ENCODE measurements at regions of chr12 and their contacts with region 1.

Region 1: GRCh38 chr12:53543539-53543938 is 36.3 kb upstream of the NPFF start:
- DNase-seq: peak; percentile 78
- H3K4me3 ChIP-seq: no peak overlapping the region
- H3K27ac ChIP-seq: peak overlapping the region; percentile 43
- H3K4me1 ChIP-seq: peaks cover 8% of the 10 kb centered on the region
- H3K27me3 ChIP-seq: no peaks in the 10 kb centered on the region
- CTCF ChIP-seq: peak; percentile 79 to 91
- POLR2A ChIP-seq: no peak

Region 2: DNA sequence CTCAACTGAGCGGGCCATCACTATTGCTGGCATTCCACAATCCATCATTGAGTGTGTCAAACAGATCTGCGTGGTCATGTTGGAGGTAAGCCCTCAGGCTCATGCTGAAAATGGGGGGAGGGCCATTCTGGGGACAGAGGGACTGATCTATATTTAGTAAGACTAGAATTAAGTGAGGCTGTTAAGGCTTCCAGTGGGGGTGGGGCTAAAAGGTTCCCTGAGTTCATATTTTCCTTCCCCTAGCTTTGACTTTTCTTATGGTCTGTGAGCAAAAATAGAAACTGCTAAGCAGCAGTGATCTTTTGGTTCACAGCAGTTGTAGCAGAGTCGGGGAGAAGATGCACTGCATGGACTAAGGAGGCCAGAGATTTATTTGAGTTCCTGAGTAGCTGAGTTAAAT is 82.5 kb before region 1 on chr12:
- CTCF ChIA-PET with region 1: no interaction called
- POLR2A ChIA-PET with region 1: no interaction called
- dilution Hi-C with region 1: no loop called
- intact Hi-C with region 1: no loop called
- DNase-seq: no peak
- H3K4me3 ChIP-seq: no peak overlapping the region
- H3K27ac ChIP-seq: no peak overlapping the region
- H3K4me1 ChIP-seq: no peaks in the 10 kb centered on the region
- H3K27me3 ChIP-seq: no peaks in the 10 kb centered on the region
- CTCF ChIP-seq: no peak
- POLR2A ChIP-seq: no peak

Region 3: GRCh38 chr12:53476769-53477209 is 66.8 kb before region 1 on chr12:
- CTCF ChIA-PET with region 1: no interaction called
- POLR2A ChIA-PET with region 1: no interaction called
- dilution Hi-C with region 1: no loop called
- intact Hi-C with region 1: no loop called
- DNase-seq: peak; percentile 36
- H3K4me3 ChIP-seq: no peak overlapping the region
- H3K27ac ChIP-seq: no peak overlapping the region
- H3K4me1 ChIP-seq: no peaks in the 10 kb centered on the region
- H3K27me3 ChIP-seq: no peaks in the 10 kb centered on the region
- CTCF ChIP-seq: peak; percentile 18 to 29
- POLR2A ChIP-seq: no peak

Region 4: DNA sequence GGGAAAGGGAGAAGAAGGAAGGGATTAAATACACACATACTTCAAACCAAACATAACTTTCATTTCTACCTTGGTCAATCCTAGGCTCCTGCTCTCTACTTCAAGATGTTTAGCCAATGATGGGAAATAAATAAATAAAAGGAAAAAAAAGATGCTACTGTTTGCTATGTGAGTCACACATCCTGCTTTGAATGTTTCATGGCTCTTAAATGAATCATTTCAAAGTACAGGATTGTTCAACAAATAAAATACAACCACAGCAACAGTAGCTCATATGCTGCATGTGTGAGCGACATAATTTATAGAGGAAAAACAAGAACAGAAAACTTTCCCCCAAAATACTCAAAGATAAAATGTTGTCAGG is 18.0 kb after region 1 on chr12:
- CTCF ChIA-PET with region 1: interaction called, 40 read pairs
- POLR2A ChIA-PET with region 1: no interaction called
- dilution Hi-C with region 1: no loop called
- intact Hi-C with region 1: loop called (anchors 1 kb)
- DNase-seq: peak; percentile 93
- H3K4me3 ChIP-seq: peak overlapping the region in 1 of 3 experiments; percentile 19
- H3K27ac ChIP-seq: peak overlapping the region; percentile 96
- H3K4me1 ChIP-seq: peaks cover 28% of the 10 kb centered on the region
- H3K27me3 ChIP-seq: no peaks in the 10 kb centered on the region
- CTCF ChIP-seq: no peak
- POLR2A ChIP-seq: no peak

Region 5: DNA sequence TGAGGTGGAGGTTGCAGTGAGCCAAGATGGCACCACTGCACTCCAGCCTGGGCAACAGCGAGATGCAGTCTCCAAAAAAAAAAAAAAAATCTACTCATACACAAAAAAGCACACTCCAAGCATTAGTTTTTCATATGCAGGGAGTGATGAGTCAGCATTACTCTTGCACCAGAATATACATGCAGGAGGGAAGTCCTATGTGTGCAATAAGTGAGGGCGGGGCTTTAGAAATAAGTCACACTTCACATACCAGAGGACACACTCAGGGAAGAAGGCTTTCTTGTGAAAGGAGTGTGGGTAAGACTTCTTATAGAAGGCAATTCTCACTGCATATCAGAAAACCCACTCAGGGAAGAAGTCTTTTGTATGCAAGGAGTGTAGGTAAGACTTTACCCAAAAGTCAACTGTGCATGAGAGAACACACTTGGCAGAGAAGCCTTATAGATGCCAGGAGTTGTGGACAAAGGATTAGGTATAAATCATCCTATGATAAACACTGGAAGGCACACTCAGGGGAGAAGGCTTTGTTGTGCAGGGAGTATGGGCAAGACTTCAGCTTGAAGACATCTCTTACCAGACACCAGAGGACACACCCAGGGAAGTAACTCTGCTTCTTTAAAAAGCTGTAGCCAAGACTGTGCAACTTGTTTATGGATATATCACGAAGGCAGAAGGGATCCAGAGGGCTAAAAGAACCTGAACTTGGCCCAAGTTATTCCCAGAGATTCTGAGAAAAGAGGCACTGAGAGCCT is 32.1 kb after region 1 on chr12:
- CTCF ChIA-PET with region 1: interaction called, 13 read pairs
- POLR2A ChIA-PET with region 1: no interaction called
- dilution Hi-C with region 1: no loop called
- intact Hi-C with region 1: no loop called
- DNase-seq: no peak
- H3K4me3 ChIP-seq: no peak overlapping the region
- H3K27ac ChIP-seq: no peak overlapping the region
- H3K4me1 ChIP-seq: no peaks in the 10 kb centered on the region
- H3K27me3 ChIP-seq: no peaks in the 10 kb centered on the region
- CTCF ChIP-seq: no peak
- POLR2A ChIP-seq: no peak

Region 6: DNA sequence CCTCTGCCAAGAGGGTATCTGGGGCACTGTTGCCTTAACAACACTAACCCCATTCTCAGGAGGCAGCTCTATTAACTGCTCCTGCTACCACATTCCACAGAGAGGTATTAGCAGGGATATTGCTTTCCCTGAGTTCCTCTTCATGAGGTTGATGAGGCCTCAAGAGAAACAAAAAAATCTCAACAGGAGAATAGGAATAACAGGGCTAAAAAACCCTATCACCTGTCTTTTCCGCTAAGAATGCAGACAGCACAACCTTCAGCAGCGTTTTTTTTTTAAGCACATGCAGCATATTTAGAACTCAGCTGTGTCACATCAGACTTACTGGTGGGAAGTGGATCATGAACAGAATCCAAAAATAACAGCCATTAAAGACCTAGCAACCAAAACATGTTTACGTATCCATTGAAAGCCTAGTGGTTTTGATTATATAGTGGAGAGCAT is 53.4 kb after region 1 on chr12:
- CTCF ChIA-PET with region 1: interaction called, 28 read pairs
- POLR2A ChIA-PET with region 1: no interaction called
- dilution Hi-C with region 1: no loop called
- intact Hi-C with region 1: loop called (anchors 2 kb)
- DNase-seq: peak; percentile 92
- H3K4me3 ChIP-seq: no peak overlapping the region
- H3K27ac ChIP-seq: peak overlapping the region; percentile 54
- H3K4me1 ChIP-seq: peaks cover 40% of the 10 kb centered on the region
- H3K27me3 ChIP-seq: no peaks in the 10 kb centered on the region
- CTCF ChIP-seq: no peak
- POLR2A ChIP-seq: no peak

Region 7: DNA sequence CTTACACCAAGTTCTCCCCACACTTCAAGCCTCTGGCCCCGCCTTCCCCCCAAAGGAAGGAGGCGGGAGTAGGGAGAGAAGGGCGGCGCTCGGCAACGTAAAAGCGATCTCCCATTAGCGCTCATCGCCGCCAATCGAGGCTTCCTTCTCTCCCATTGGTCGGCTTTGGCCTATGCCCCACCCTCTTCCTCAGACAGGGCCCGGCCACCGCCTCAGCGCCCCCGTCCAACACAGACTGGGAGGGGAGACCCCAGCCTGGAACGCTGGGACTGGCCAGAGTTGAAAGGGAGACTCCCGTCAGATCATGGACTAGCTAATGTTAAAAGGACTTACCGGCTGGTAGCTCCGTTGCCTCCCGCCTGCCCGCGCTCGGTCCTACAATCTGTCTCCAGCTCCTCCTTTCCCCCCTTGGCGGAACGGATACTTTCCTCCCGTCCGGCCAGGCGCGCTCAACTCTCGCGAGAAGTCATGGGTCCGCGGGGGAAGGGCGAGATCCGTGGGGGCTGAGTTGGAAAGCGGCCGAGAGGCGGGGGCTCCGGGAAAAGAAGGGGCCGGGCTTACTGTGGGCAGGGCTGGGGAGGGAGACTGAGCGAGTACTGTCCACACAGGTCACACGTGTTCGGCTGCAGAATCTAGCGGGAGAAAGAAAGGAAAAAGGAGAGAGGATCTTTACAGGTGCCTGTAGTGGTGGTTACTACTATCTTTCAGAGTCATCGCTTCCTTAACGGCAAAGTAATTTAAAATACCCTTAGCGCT is 82.6 kb after region 1 on chr12 and contains the start of gene ATF7:
- CTCF ChIA-PET with region 1: interaction called, 26 read pairs
- POLR2A ChIA-PET with region 1: interaction called, 4 read pairs
- dilution Hi-C with region 1: no loop called
- intact Hi-C with region 1: loop called (anchors 2 kb)
- DNase-seq: peak; percentile 99
- H3K4me3 ChIP-seq: peak within 1 kb of the TSS; percentile 61 to 97 (median 87)
- H3K27ac ChIP-seq: peak within 1 kb of the TSS; percentile 86
- H3K4me1 ChIP-seq: peaks cover 29% of the 10 kb centered on the region
- H3K27me3 ChIP-seq: no peaks in the 10 kb centered on the region
- CTCF ChIP-seq: no peak
- POLR2A ChIP-seq: no peak
- total RNA-seq, gene ATF7: 56.9 and 68.5 TPM in 2 replicates

Region 8: GRCh38 chr12:53659011-53659551 is 115.5 kb after region 1 on chr12:
- CTCF ChIA-PET with region 1: interaction called, 26 read pairs
- POLR2A ChIA-PET with region 1: no interaction called
- dilution Hi-C with region 1: no loop called
- intact Hi-C with region 1: no loop called
- DNase-seq: peak; percentile 90
- H3K4me3 ChIP-seq: no peak overlapping the region
- H3K27ac ChIP-seq: peak overlapping the region; percentile 76
- H3K4me1 ChIP-seq: peaks cover 14% of the 10 kb centered on the region
- H3K27me3 ChIP-seq: no peaks in the 10 kb centered on the region
- CTCF ChIP-seq: no peak
- POLR2A ChIP-seq: no peak

Region 9: DNA sequence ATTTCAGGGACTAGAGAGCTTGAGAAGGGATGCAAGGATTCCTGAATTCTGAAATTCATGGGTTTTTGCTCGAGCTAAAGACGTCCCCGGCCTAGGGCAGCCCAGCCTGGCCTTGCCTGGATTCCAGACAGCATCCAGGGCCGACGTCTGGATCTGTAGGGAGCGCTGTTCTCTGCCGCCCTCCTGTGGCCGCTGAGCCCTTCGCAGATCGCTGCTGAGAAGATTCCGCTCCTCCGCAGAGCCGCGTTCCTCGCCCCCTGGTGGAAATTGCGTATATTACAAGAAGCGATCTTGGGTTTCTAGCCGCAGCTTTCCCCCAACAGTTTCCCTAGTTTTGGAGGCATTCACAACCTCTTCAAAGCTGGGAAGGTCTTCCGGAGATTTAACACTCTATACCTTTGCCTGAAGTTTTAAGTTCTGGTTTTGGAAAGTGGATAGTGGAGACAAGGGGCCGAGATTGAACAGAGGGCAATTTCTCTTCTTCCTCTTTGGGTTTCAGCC is 203.1 kb after region 1 on chr12:
- CTCF ChIA-PET with region 1: interaction called, 30 read pairs
- POLR2A ChIA-PET with region 1: no interaction called
- dilution Hi-C with region 1: no loop called
- intact Hi-C with region 1: loop called (anchors 1 kb)
- DNase-seq: peak; percentile 89
- H3K4me3 ChIP-seq: no peak overlapping the region
- H3K27ac ChIP-seq: no peak overlapping the region
- H3K4me1 ChIP-seq: no peaks in the 10 kb centered on the region
- H3K27me3 ChIP-seq: peaks cover 61 to 89% of the 10 kb centered on the region in 2 experiments
- CTCF ChIP-seq: peak; percentile 100
- POLR2A ChIP-seq: no peak